Activated CD4-positive, alpha-beta T cell treated with anti-CD3 and anti-CD28 coated beads, Interleukin-2, amount 10 ng/mL, durations not matched to agents 24 days and 14 days (primary cell): ENCODE measurements at regions of chr10 and their contacts with region 1.

Region 1: DNA sequence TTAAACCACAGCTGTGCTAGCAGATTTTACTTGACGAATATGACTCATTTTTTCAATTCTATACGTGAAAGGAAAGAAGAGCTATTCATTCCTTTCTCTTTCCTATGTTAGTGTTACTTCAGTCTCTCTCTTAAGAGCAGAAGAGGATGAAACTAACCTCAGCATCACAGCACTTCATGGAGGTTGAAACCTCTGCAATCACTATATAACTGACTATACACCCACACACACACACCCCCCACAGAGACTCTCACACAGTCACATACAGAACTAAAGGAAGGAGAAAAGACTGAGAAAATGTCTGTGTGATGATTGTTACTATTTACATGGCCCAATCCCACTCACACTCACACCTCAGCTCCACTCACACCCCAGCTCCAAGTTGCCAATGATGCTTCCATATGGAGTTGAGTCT is 104.2 kb downstream of the KIF20B start:
- DNase-seq: peak; percentile 65
- H3K4me3 Mint-ChIP-seq: no peak overlapping the region
- H3K27ac Mint-ChIP-seq: peak overlapping the region; percentile 27
- H3K4me1 Mint-ChIP-seq: peaks cover 21% of the 10 kb centered on the region
- H3K27me3 Mint-ChIP-seq: peaks cover 22% of the 10 kb centered on the region

Region 2: DNA sequence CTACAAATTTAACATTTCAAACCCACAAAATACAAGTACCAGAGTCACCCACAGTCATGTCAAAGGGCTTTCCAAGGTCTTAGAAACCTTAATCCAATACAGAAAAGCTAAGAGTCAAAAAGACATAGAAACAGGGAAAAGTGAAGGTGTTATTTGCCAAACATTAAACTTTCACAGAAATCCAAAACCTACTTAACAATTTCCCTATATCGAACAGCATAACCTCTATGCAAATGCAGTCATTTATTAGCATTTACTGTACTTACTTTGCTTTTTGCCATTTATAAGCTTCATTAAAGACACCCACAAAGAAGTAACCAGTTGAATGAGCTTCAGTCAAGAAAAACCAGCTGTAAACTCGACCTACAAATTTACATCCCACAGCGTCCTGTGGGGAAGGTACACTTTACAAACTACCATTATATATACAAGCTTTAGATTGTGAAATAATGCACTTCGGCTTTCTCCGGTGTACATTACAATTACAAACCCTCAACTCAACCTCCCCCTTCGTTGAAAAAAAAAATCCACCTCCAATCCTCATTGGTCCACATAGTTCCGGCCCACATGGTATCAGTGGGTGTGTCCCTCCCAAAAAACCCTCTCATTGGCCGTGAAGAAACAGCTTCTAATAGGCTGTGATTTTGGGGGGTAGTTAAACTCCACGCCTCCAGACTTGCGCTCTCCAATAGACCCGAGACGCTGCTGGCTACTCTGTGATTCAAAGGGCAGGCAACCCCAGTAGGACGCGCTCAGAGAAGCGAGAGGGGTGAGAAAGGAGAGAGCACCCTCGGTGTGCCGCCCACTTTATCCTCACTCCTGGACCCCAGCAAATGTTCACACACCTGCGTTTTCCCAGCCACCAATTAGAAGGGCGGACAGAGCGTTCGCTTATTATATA is 161.9 kb before region 1 on chr10:
- intact Hi-C with region 1: no loop called
- DNase-seq: peak; percentile 93
- H3K4me3 Mint-ChIP-seq: no peak overlapping the region
- H3K27ac Mint-ChIP-seq: no peak overlapping the region
- H3K4me1 Mint-ChIP-seq: peaks cover 10% of the 10 kb centered on the region
- H3K27me3 Mint-ChIP-seq: peaks cover 17% of the 10 kb centered on the region

Region 3: GRCh38 chr10:90087197-90088007 is 281.8 kb after region 1 on chr10:
- intact Hi-C with region 1: loop called (anchors 2 kb)
- DNase-seq: no peak
- H3K4me3 Mint-ChIP-seq: no peak overlapping the region
- H3K27ac Mint-ChIP-seq: no peak overlapping the region
- H3K4me1 Mint-ChIP-seq: peaks cover 6% of the 10 kb centered on the region
- H3K27me3 Mint-ChIP-seq: peaks cover 1% of the 10 kb centered on the region